Activated naive CD4-positive, alpha-beta T cell treated with anti-CD3 and anti-CD28 coated beads, Interleukin-2, amount 10 ng/mL, durations not matched to agents 7 days and 5 days (primary cell): ENCODE measurements at regions of chr7 and their contacts with region 1.

Region 1: DNA sequence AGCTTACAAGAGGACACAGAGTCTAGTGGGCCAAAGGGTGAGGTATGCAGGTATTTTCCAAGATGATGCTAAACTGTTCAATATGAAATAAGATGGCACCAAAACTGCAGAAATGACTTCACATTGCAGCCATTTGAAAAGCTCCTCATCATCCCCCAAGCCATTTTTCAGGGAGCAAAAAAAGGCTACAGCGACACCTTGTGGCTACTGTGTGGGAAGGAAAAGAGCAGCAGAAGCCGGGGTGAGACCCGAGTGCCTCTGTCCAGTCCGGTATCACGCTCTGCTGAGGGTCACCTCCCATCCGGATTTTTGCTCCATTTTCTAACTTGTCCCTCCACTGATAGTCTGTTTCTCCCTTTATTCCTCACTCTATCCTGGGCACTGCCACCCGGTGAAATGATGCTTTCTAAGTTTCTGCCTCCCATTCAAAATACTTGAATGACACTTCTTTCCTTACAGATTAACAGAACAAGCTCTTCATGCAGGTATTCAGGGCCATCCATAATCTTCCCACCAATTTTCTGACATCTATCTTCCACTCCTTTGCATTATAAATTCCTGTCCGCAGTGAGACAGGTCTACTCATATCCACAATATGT is 220.2 kb downstream of the DGKI start:
- DNase-seq: peak; percentile 61
- H3K4me3 Mint-ChIP-seq: no peak overlapping the region
- H3K27ac Mint-ChIP-seq: no peak overlapping the region
- H3K4me1 Mint-ChIP-seq: no peaks in the 10 kb centered on the region
- H3K27me3 Mint-ChIP-seq: peaks cover 3% of the 10 kb centered on the region

Region 2: DNA sequence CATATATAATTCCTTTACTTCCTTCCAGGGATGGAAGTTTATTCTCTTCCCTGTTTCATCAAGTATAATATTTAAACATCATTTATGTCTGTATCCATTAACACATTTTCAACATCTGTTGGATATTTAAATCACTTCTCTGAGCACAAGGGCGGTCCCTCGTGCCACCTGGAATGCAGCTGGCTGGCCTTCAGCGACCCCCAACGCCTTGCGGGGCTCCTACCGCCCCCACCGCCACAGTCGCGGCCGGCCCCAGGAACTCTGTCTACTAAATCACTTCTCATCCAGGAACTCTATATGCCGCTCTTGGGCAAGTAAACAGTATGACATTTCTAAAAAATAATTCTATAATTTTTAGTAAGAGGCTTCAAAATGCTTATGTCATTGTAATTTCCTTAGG is 61.9 kb before region 1 on chr7:
- CTCF ChIA-PET with region 1: no interaction called
- DNase-seq: no peak
- H3K4me3 Mint-ChIP-seq: no peak overlapping the region
- H3K27ac Mint-ChIP-seq: no peak overlapping the region
- H3K4me1 Mint-ChIP-seq: no peaks in the 10 kb centered on the region
- H3K27me3 Mint-ChIP-seq: no peaks in the 10 kb centered on the region

Region 3: GRCh38 chr7:137606061-137606674 is 20.4 kb before region 1 on chr7:
- CTCF ChIA-PET with region 1: interaction called, 14 read pairs
- DNase-seq: no peak
- H3K4me3 Mint-ChIP-seq: no peak overlapping the region
- H3K27ac Mint-ChIP-seq: no peak overlapping the region
- H3K4me1 Mint-ChIP-seq: no peaks in the 10 kb centered on the region
- H3K27me3 Mint-ChIP-seq: peaks cover 8% of the 10 kb centered on the region

Region 4: DNA sequence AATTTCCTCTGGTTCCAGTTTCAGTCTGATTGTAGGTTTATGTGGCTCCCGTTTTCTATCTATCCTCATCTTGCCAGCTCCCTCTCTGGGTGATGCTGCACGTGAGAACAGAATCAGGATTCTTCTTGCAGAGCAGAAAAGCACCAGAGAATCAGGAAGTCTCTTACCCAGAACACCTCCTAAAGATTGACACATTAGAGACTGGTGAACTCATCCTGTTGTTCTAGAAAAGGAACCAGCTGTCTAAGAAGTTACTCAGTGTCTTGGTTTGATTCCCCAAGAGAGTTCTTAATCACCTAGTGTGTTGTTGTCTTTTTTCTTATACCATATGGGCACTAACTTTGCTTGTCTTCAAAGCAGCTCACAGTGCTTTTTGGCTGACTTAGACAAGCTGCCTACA is 67.8 kb after region 1 on chr7:
- CTCF ChIA-PET with region 1: no interaction called
- DNase-seq: no peak
- H3K4me3 Mint-ChIP-seq: no peak overlapping the region
- H3K27ac Mint-ChIP-seq: no peak overlapping the region
- H3K4me1 Mint-ChIP-seq: no peaks in the 10 kb centered on the region
- H3K27me3 Mint-ChIP-seq: no peaks in the 10 kb centered on the region